Panc1 (cell line): ENCODE measurements at regions of chr7 and their contacts with region 1.

Region 1: DNA sequence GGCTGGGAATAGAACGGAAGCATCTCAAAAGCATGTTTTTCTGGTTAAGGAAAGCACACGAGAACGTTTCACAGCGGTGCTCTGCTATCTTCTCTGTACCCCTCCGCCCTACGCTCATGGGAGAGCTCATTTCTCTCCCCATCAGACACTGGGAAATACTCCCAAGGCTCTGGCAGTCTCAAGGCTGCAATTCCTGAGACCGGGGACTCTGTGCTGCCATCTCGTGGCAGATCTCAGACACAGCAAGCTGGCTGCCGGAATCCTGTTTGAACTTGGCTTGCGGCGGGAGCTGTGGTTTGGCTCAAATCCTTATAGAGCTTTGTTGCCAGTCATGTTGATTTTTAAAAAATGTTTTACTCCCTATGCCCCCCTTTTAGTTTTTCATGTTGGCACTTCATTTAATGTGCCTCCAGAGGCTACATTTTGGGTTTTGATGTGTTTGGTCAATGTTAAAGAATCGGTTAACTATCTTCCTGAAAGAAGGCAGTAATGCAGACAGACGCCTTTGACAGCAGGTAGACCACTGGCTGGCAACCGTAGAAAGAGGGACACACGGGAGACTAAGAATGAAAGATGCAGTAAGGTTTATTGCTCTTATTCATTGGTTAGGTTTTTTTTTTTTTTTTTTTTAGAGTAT is 27.6 kb downstream of the BMPER start:
- DNase-seq: peak; percentile 84
- ATAC-seq: peak; percentile 92
- H3K4me3 ChIP-seq: 0 out of 4 replicates have a peak overlapping the region, but pooled peaks of 1 of the 2 experiments have one; percentile 7
- H3K27ac ChIP-seq: no peak overlapping the region
- H3K4me1 ChIP-seq: no peaks in the 10 kb centered on the region; the same call in 1 of the 2 replicates
- H3K27me3 ChIP-seq: peaks cover 18% of the 10 kb centered on the region
- CTCF ChIP-seq: peak; percentile 98

Region 2: GRCh38 chr7:33185786-33186185 is 747.2 kb before region 1 on chr7:
- CTCF ChIA-PET with region 1: interaction called, 6 read pairs
- POLR2A ChIA-PET with region 1: no interaction called
- in situ Hi-C with region 1: no loop called
- intact Hi-C with region 1: loop called (anchors 2 kb)
- DNase-seq: peak; percentile 48
- ATAC-seq: peak; percentile 91
- H3K4me3 ChIP-seq: no peak overlapping the region
- H3K27ac ChIP-seq: no peak overlapping the region
- H3K4me1 ChIP-seq: no peaks in the 10 kb centered on the region
- H3K27me3 ChIP-seq: peaks cover 2% of the 10 kb centered on the region; the same call in 1 of the 2 replicates
- CTCF ChIP-seq: peak; percentile 79; the same call in 1 of the 2 replicates

Region 3: DNA sequence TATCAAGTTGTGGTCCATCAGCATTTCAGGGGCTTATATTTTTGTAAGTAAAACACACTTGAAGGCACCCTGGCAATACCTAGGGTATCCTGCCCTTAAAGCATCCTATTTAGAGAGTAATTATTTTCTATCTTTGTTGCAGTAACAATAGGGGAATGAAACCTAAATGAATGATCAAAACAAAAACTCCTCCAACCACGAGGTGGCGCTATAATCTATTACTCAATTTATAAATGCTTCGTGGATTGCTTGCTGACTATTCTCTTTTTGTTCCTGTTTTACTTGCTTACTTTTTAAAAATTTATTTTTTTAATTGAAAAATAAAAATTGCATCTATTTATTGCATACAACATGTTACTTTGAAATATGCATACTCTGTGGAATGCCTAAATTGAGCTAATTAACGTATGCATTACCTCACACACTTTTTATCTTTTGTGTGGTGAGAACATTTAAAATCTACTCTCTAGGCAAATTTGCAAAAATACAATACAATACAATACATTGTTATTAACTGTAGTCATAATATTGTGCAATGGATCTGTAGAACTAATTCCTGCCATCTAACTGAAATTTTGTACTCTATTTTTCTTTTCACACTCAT is 175.3 kb before region 1 on chr7:
- CTCF ChIA-PET with region 1: interaction called, 4 read pairs
- POLR2A ChIA-PET with region 1: no interaction called
- in situ Hi-C with region 1: no loop called
- intact Hi-C with region 1: loop called (anchors 5 kb)
- DNase-seq: peak; percentile 22
- ATAC-seq: no peak
- H3K4me3 ChIP-seq: no peak overlapping the region
- H3K27ac ChIP-seq: no peak overlapping the region
- H3K4me1 ChIP-seq: no peaks in the 10 kb centered on the region
- H3K27me3 ChIP-seq: peaks cover 10% of the 10 kb centered on the region; the same call in 1 of the 2 replicates
- CTCF ChIP-seq: peak; percentile 73; the same call in 1 of the 2 replicates

Region 4: GRCh38 chr7:33836786-33837355 is 96.1 kb before region 1 on chr7:
- CTCF ChIA-PET with region 1: no interaction called
- POLR2A ChIA-PET with region 1: no interaction called
- in situ Hi-C with region 1: no loop called
- intact Hi-C with region 1: no loop called
- DNase-seq: no peak
- ATAC-seq: no peak
- H3K4me3 ChIP-seq: no peak overlapping the region
- H3K27ac ChIP-seq: no peak overlapping the region
- H3K4me1 ChIP-seq: no peaks in the 10 kb centered on the region
- H3K27me3 ChIP-seq: no peaks in the 10 kb centered on the region; the same call in 1 of the 2 replicates
- CTCF ChIP-seq: peak; percentile 84